Stomach (tissue), 19 donors: ENCODE measurements at regions of chr13 and their contacts with region 1.

Region 1: GRCh38 chr13:27826379-27827353 is 34.4 kb downstream of the GSX1 start:
- DNase-seq: peak; percentile 86 to 95
- H3K4me3 ChIP-seq: peak overlapping the region; percentile 19 to 36 (median 25)
- H3K27ac ChIP-seq: no peak overlapping the region
- H3K4me1 ChIP-seq: peaks cover 0 to 23% (median 16%) of the 10 kb centered on the region in 4 donors
- H3K27me3 ChIP-seq: peaks cover 16 to 85% (median 46%) of the 10 kb centered on the region in 3 donors
- CTCF ChIP-seq: peak in 5 of 7 experiments; percentile 84 to 96 (median 92)
- EP300 ChIP-seq: no peak
- POLR2A ChIP-seq: no peak

Region 2: DNA sequence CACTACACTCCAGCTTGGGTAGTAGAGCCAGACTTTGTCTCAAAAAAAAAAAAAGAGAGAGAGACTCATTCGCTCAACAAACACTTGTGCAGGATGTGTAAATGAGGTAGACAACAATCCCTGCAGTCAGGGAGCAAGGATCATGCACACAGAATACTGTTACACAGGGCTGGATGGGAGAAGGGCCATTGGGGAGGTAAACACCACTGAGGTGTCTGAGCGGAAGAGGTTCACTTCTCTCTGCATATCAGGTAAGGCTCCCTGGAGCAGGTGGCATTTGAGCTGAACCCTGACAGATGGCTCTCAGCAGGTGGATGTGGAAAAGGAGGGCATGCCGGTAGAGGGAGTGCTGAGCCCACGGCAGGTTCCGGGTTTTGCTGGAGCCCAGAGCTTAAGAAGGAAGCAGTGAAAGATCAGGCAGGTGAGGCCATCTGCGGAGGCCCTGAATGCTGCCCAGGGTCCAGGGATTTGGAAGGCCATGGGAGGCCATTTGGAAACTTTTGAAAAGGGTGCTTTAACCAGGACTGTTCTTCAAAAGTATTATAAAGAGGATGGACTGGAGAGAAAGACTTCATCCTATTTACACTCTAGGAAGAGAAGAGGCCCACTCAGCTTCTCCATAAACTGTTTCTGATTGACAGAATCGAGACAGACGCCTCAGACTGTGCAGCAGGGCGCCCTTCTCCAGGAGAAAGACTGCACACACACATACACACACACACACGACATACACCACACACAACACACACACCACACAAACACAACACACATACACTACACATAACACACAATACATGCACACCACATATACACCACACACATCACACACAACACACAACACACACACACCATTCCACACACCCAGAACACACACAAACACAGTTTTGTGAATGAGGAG is 854.4 kb before region 1 on chr13:
- intact Hi-C with region 1: loop called (anchors 10 kb)
- DNase-seq: peak; percentile 69 to 84
- H3K4me3 ChIP-seq: no peak overlapping the region
- H3K27ac ChIP-seq: peak overlapping the region in 4 of 5 donors; percentile 43 to 59 (median 55)
- H3K4me1 ChIP-seq: peaks cover 20 to 29% (median 26%) of the 10 kb centered on the region in 4 donors
- H3K27me3 ChIP-seq: no peaks in the 10 kb centered on the region
- CTCF ChIP-seq: peak in 5 of 7 experiments; percentile 7 to 58 (median 33)
- EP300 ChIP-seq: no peak
- POLR2A ChIP-seq: no peak

Region 3: DNA sequence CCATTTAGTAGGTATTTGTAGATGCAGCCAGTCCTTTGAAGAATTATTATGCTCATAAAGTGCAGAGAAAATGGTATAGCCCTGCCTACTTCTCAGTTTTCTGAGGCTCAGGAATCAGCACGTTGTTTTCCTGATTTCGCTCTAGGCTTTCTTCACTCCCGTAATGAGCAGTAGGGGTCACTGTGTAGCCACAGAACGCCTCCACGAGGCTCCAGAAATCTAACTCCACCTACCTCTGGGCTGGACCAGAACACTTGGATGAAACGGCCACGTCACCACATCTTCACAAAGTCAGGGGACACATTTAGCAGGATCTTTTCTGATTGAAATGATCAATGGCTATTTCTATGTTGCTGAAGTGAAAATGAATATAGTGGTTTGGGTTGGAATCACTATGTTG is 452.0 kb before region 1 on chr13:
- intact Hi-C with region 1: loop called (anchors 5 kb)
- DNase-seq: peak; percentile 73 to 93
- H3K4me3 ChIP-seq: no peak overlapping the region
- H3K27ac ChIP-seq: peak overlapping the region in 1 of 5 donors; percentile 2
- H3K4me1 ChIP-seq: peaks cover 5 to 38% (median 21%) of the 10 kb centered on the region in 4 donors
- H3K27me3 ChIP-seq: peaks cover 0 to 9% (median 0%) of the 10 kb centered on the region in 3 donors
- CTCF ChIP-seq: peak in 5 of 7 experiments; percentile 45 to 83 (median 57)
- EP300 ChIP-seq: no peak
- POLR2A ChIP-seq: no peak

Region 4: DNA sequence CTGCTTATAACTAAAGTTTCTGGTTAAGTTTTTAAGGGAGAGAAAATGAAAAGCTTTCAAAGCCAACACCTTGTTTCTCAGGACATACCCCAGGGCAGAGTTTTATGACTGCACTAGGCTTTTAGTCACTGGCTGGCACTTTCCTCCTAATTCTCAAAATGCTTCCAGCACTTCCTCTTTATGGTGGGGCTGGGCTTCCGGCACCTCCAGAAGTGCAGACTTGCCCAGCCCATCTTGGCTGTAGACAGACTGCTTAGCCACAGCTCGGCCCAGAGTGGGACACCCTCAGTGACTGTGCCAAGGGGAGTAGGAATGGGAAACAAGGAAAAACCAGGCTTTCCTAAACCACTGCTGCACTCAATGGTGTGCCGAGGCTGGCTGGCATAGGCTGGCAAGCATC is 425.5 kb before region 1 on chr13:
- intact Hi-C with region 1: no loop called
- DNase-seq: no peak
- H3K4me3 ChIP-seq: no peak overlapping the region
- H3K27ac ChIP-seq: peak overlapping the region in 3 of 5 donors; percentile 30 to 66 (median 38)
- H3K4me1 ChIP-seq: peaks cover 22 to 51% (median 43%) of the 10 kb centered on the region in 4 donors
- H3K27me3 ChIP-seq: no peaks in the 10 kb centered on the region
- CTCF ChIP-seq: no peak
- EP300 ChIP-seq: no peak
- POLR2A ChIP-seq: no peak

Region 5: GRCh38 chr13:27533155-27533643 is 293.5 kb before region 1 on chr13:
- intact Hi-C with region 1: loop called (anchors 10 kb)
- DNase-seq: peak; percentile 92 to 94
- H3K4me3 ChIP-seq: peak overlapping the region in 3 of 4 donors; percentile 16 to 24 (median 20)
- H3K27ac ChIP-seq: peak overlapping the region in 1 of 5 donors; percentile 26
- H3K4me1 ChIP-seq: peaks cover 8 to 17% (median 8%) of the 10 kb centered on the region in 4 donors
- H3K27me3 ChIP-seq: no peaks in the 10 kb centered on the region
- CTCF ChIP-seq: peak in 5 of 7 experiments; percentile 84 to 93 (median 88)
- EP300 ChIP-seq: no peak
- POLR2A ChIP-seq: no peak